Adrenal gland (tissue), 19 donors: ENCODE measurements at regions of chr19 and their contacts with region 1.

Region 1: DNA sequence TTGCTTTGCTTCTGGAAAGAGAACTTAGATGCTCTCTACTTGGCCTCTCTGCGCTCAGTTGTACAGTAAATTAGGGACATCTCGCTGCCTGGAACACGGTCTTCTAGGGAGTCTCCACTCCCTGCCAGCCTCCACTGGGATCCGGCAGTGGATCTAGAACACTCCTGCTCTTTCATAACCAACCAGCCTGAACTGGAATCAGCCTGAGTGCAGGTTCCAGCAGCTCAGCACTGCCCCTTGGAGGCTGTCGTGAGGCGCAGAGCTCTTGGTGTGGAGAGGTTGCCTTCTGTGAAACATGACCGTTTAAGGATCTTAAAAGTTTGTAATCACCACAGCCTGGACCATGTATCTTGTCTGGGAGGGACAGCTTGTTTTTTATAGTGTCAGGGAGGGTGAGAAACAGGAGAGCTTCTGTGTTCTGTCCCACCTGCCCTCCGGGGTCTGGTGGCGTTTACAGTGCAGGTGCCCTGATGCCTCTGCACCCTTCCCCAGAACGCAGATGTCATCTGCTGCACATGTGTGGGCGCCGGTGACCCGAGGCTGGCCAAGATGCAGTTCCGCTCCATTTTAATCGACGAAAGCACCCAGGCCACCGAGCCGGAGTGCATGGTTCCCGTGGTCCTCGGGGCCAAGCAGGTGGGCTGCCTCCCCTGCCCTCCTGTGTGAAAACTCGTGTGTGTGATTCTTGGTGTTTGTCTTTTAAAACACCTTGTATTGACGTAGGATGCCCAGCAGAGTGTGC is 24.8 kb downstream of the UPF1 start:
- DNase-seq: no peak
- H3K4me3 ChIP-seq: no peak overlapping the region
- H3K27ac ChIP-seq: no peak overlapping the region
- H3K4me1 ChIP-seq: peaks cover 0 to 4% of the 10 kb centered on the region in 2 donors
- H3K27me3 ChIP-seq: no peaks in the 10 kb centered on the region
- CTCF ChIP-seq: peak in 1 of 6 experiments; percentile 14
- POLR2A ChIP-seq: no peak

Region 2: GRCh38 chr19:18373892-18374629 is 482.5 kb before region 1 on chr19:
- intact Hi-C with region 1: no loop called
- DNase-seq: peak; percentile 83 to 99 (median 97)
- H3K4me3 ChIP-seq: no peak overlapping the region
- H3K27ac ChIP-seq: peak overlapping the region; percentile 50 to 95 (median 88)
- H3K4me1 ChIP-seq: peaks cover 13 to 25% of the 10 kb centered on the region in 2 donors
- H3K27me3 ChIP-seq: no peaks in the 10 kb centered on the region
- CTCF ChIP-seq: no peak
- POLR2A ChIP-seq: peak in 1 of 2 donors; percentile 34

Region 3: GRCh38 chr19:18450931-18451845 is 405.4 kb before region 1 on chr19:
- intact Hi-C with region 1: loop called in 1 of 2 experiments (anchors 10 kb)
- DNase-seq: peak; percentile 77 to 95 (median 88)
- H3K4me3 ChIP-seq: no peak overlapping the region
- H3K27ac ChIP-seq: peak overlapping the region in 1 of 5 donors; percentile 53
- H3K4me1 ChIP-seq: peaks cover 0 to 4% of the 10 kb centered on the region in 2 donors
- H3K27me3 ChIP-seq: no peaks in the 10 kb centered on the region
- CTCF ChIP-seq: peak; percentile 90 to 99 (median 97)
- POLR2A ChIP-seq: no peak

Region 4: DNA sequence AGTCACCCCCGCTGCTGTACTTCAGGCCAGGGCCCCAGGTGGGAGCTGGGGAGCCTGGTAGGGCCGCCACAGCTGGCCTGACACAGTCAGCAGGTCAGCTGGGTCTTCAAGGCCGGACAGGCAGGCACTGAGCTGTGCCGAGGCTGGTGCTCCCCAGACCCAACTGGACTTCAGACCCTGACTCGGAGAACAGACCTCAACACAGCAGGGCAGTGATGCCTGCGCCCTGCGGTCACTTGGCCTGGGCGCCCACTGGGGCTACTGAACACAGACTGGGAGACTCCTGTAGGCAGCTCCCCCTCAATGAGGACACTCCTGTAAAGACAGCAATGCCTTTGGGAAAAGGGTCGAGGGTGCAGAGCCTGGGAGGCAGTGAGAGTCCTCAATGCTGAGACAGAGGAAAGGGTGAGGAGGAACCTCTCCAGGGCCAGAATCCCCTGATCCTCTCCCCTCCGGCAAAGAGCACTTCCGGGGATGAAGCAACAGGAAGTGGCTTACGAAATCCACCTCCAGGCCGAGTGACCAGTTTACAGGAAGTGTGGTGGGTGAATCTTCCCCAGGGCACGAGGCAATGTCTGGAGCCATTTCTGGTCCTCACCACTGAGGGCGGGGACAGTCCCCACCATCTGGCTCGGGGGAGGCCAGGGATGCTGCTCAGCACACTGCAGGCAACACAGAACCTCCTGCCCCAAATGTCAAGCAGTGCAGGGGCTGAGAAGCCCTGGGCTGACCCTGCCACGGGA is 377.8 kb before region 1 on chr19:
- intact Hi-C with region 1: loop called in 1 of 2 experiments (anchors 10 kb)
- DNase-seq: peak; percentile 67 to 91 (median 84)
- H3K4me3 ChIP-seq: no peak overlapping the region
- H3K27ac ChIP-seq: peak overlapping the region; percentile 69 to 94 (median 75)
- H3K4me1 ChIP-seq: peaks cover 29 to 71% of the 10 kb centered on the region in 2 donors
- H3K27me3 ChIP-seq: no peaks in the 10 kb centered on the region
- CTCF ChIP-seq: no peak
- POLR2A ChIP-seq: no peak

Region 5: GRCh38 chr19:18817574-18817973 is 39.0 kb before region 1 on chr19:
- intact Hi-C with region 1: no loop called
- DNase-seq: no peak
- H3K4me3 ChIP-seq: no peak overlapping the region
- H3K27ac ChIP-seq: no peak overlapping the region
- H3K4me1 ChIP-seq: no peaks in the 10 kb centered on the region
- H3K27me3 ChIP-seq: no peaks in the 10 kb centered on the region
- CTCF ChIP-seq: no peak
- POLR2A ChIP-seq: no peak

Region 6: DNA sequence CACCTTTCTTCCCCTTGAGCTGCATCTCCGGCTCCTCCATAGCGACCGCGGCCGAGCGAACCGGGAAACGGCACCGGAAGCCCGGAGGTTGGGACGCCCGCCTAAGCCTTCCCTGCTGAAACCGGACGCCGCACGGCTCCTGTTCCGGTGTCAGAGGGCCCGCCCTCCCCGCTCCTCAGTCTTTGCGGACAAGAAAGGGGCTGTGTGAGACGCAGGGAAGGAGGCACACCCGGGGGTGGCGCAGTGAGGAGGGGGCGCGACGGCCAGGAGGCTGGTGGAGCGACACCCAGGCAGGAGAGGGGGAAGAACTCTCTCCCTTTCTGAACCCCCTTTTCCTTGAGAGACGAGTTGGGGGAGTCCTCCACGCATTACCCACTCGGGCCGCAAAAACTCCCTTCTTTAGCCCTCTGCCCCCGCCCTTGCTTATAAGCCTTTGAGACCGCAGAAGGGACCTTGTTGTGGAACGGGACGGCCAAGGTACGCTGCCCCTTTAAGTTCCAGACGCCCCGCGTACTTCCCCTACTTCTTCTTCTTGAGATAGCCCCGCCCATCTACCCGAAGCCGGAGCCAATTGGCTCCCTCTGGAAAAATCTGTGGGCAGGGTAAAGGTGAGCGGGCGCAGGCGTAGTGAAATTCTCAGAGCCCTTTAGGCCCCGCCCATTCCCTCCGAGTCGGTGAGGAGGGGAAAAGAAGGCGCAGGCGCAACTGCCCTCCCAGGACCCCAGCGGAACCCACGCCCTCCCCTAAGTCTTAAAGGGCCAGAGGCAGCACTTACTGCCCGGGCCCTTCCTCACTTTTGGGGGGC is 335.7 kb after region 1 on chr19 and contains the starts of genes BORCS8 and RFXANK:
- intact Hi-C with region 1: no loop called
- DNase-seq: peak; percentile 99 to 100 (median 99)
- H3K4me3 ChIP-seq: peak within 1 kb of the TSS; percentile 54 to 88 (median 80)
- H3K27ac ChIP-seq: peak within 1 kb of the TSS; percentile 69 to 99 (median 98)
- H3K4me1 ChIP-seq: peaks cover 9 to 40% of the 10 kb centered on the region in 2 donors
- H3K27me3 ChIP-seq: no peaks in the 10 kb centered on the region
- CTCF ChIP-seq: peak in 1 of 6 experiments; percentile 14
- POLR2A ChIP-seq: peak; percentile 24 to 86
- total RNA-seq, gene BORCS8: 8.3 to 32.2 (median 21.9) TPM
- total RNA-seq, gene RFXANK: 28.0 to 79.9 (median 51.6) TPM